Transverse colon (tissue), 4 donors: ENCODE measurements at regions of chr15 and their contacts with region 1.

Region 1: DNA sequence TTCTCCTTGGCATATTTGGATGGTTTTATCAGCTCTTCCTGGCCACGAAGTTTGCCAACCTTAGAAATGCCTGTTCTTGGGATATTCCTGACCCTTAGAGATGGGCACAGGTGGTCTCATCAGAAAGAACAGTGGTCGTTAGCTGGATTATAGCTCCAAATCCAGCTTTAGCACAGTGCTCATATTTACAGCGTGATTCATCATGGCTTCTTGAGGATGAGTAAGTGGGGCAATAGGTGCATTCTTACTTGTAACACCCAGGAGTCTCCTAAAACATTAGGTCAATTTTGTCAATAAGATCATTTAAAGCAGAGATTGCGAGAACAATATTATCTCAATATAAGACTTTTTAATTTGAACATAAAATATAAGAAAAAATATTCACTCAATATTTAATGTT is 191.9 kb downstream of the GABRB3 start:
- DNase-seq: no peak
- H3K4me3 ChIP-seq: no peak overlapping the region
- H3K27ac ChIP-seq: no peak overlapping the region
- H3K4me1 ChIP-seq: no peaks in the 10 kb centered on the region
- H3K27me3 ChIP-seq: no peaks in the 10 kb centered on the region
- CTCF ChIP-seq: no peak
- EP300 ChIP-seq: no peak
- POLR2A ChIP-seq: no peak

Region 2: DNA sequence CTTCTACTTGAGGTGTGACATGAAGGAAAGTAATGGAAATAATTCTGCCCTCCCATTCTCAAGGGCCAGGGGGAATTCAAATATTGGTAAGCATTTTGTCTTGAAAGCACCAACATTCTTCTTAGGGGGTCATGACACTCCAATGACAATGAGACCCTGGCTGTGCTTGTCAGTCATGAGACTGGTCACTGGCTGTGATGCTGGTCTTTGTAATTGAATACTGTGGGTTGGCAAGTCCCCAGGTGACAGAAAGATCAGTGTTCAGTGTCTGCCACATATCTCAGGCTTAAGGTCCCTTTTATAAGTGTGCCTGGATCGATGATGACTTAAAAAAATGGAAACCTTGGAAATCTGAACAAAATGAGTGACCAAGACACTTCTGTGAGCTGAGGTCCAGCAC is 1474.7 kb before region 1 on chr15:
- in situ Hi-C with region 1: no loop called
- intact Hi-C with region 1: no loop called
- DNase-seq: no peak
- H3K4me3 ChIP-seq: no peak overlapping the region
- H3K27ac ChIP-seq: no peak overlapping the region
- H3K4me1 ChIP-seq: no peaks in the 10 kb centered on the region
- H3K27me3 ChIP-seq: no peaks in the 10 kb centered on the region
- CTCF ChIP-seq: no peak
- EP300 ChIP-seq: no peak
- POLR2A ChIP-seq: no peak

Region 3: DNA sequence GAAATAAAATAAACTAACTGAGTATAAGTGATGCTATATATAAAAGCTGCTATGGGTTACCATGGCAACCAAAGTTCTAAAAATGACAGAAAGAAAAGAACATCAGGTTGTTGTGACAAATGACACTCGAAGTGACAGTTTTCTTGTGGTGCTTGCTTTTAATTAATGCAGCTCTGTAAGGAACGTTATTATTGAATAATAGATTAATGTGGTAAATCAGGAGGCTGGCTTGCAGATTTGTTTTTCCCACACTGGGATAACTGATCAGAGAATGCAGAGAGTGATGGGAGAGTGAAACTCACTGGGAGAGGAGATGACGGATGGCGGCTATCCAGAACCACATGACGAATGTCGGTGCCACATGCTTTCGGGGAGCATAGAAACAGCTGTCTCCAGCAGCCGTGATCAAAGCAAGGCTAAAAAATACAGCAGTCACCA is 510.8 kb before region 1 on chr15:
- in situ Hi-C with region 1: no loop called
- intact Hi-C with region 1: no loop called
- DNase-seq: no peak
- H3K4me3 ChIP-seq: no peak overlapping the region
- H3K27ac ChIP-seq: no peak overlapping the region
- H3K4me1 ChIP-seq: no peaks in the 10 kb centered on the region
- H3K27me3 ChIP-seq: no peaks in the 10 kb centered on the region
- CTCF ChIP-seq: no peak
- EP300 ChIP-seq: no peak
- POLR2A ChIP-seq: no peak

Region 4: DNA sequence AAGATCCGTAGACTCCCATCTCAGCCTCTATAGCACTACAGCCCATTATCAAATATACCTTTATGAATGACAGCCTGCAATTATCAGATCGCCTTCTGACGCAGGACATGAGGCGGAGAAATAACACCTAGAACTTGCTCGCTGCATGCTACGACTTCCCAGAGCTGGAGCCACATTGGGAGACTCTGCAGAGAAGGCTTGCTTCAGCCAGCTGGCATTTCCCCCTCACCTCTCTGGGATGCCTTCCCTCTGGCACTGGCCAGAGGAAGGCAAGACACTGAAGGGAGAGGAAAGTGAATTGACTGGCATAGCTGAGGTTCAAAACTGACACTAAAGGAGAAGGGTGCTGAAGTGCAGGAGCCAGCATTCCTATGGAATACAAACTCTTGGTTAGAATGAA is 60.2 kb after region 1 on chr15:
- in situ Hi-C with region 1: loop called in 1 of 4 experiments (anchors 10 kb)
- intact Hi-C with region 1: no loop called
- DNase-seq: no peak
- H3K4me3 ChIP-seq: no peak overlapping the region
- H3K27ac ChIP-seq: no peak overlapping the region
- H3K4me1 ChIP-seq: no peaks in the 10 kb centered on the region
- H3K27me3 ChIP-seq: no peaks in the 10 kb centered on the region
- CTCF ChIP-seq: no peak
- EP300 ChIP-seq: no peak
- POLR2A ChIP-seq: no peak